ENCODE measurements at regions of chr7 and their contacts with region 1.

Region 1: DNA sequence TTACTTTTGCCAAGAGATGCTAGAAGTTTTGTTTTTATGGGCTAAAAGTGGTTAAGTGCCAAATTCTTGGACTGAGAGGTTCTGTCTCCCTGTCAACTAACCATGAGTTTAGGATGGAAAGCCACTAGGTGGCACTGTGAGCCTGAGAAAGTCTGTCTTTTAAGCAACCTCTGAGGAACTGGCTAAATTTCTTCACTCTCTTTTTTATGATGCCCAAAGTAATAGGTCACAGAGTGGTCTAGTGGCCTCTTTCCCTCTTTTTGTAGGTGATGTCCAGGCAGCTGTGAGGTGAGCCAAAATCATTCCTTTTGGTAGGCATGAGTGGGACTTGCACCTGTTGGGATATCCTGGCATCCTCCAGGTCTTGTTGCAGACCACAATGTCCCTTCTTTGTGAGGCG is 56.8 kb downstream of the SND1 start:
- DNase-seq: no peak
- H3K4me3 ChIP-seq: no peak overlapping the region
- H3K27ac ChIP-seq: no peak overlapping the region
- H3K4me1 ChIP-seq: peaks cover 0 to 4% (median 0%) of the 10 kb centered on the region in 4 donors
- H3K27me3 ChIP-seq: no peaks in the 10 kb centered on the region
- CTCF ChIP-seq: peak; percentile 71 to 73 (median 72)
- EP300 ChIP-seq: no peak
- POLR2A ChIP-seq: no peak

Region 2: DNA sequence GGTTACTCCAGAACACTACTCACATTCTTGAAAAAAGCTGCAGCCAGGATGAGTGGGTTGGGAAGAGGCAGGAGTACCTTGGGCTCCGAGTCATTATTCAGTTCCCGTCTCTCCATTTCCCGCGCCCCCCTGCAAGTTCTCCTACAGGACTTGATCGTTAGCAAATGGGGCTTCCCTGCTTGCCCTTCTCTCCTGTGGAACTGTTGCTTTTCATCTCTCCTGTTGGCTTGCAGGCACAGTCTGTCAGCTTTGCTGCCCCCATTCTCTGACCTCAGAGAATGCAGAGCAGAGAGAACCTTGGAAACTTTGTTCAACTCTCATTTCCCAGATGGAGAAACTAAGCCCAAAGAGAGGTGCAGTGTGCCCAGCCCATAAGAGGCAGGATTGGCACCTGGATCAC is 358.1 kb after region 1 on chr7:
- intact Hi-C with region 1: no loop called
- DNase-seq: no peak
- H3K4me3 ChIP-seq: no peak overlapping the region
- H3K27ac ChIP-seq: no peak overlapping the region
- H3K4me1 ChIP-seq: no peaks in the 10 kb centered on the region
- H3K27me3 ChIP-seq: no peaks in the 10 kb centered on the region
- CTCF ChIP-seq: no peak
- EP300 ChIP-seq: no peak
- POLR2A ChIP-seq: no peak

Region 3: DNA sequence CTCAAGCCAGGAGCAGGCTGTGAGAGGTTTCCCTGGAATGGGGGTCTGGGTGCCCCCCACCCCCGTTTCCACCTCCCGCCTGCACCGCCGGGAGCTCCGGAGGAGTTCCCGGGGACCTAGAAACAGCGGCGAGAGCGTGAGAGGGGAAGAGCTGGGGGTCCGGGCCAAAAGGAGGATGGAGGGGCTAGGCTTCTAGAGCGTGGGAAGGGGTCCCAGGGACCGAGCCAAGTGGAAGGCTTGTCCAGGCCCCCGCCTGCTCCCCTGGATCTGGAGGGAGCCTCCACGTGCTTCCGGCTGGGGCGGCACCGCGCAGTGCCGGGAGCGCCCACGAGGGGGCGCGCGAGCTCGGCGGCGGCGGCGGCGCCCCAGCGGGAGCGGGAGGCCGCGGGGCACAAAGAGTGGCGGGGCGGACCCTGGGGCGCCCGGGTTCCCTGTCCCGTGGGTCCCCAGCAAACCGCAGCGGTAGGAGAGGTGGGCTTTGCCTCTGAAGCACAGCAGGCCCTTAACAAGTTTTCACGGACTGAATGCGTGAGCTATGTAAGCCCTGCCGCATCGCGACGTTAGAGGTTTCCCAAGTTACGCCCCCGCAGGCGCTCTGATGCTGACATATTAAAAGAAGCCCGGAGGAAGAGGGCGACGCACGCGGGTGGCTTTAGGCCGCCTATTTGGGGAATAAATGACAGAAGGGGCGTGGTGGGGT is 426.9 kb after region 1 on chr7:
- intact Hi-C with region 1: loop called (anchors 5 kb)
- DNase-seq: peak; percentile 91
- H3K4me3 ChIP-seq: peak overlapping the region; percentile 53 to 81 (median 60)
- H3K27ac ChIP-seq: no peak overlapping the region
- H3K4me1 ChIP-seq: peaks cover 18 to 23% (median 21%) of the 10 kb centered on the region in 4 donors
- H3K27me3 ChIP-seq: peaks cover 0 to 59% (median 16%) of the 10 kb centered on the region in 4 donors
- CTCF ChIP-seq: peak; percentile 73 to 100 (median 84)
- EP300 ChIP-seq: no peak
- POLR2A ChIP-seq: no peak

Region 4: DNA sequence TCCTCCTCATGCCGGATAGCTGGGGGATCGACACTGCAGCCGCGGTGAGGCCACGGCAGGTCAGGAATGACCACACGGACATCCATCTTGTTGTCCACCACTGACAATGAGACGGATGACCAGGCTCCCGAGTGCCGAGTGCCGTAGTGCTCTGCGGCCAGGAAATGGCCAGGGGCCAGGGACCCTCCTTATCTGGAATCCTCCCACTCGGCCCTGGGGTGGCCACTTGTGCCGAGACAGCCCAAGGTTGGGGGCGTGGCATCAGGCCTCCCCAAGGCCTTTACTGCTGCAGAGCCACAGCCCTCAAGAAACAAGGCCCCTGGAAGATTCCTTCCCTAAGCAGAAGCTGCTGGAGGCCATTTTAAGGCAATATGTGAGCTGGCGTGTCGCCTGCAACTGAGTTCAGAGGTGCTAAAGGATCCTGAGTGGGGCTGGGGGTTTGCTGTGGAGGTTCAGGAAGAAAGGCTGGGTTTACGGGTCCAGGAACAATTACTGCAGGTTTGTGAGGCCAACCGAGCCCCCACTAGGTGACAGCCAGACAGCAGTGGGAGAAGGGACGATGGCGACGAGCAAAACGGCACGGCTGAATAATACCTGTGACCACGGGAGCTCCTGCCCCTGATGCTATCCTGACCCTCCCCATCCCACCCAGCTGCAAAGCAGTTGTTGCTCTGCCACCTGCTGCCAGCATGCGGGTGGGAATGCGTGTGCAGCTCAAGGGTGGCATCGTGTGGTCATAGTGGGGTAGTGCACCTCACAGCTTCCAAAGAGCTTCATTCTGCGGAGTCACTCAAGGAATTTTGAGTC is 500.6 kb after region 1 on chr7:
- intact Hi-C with region 1: loop called (anchors 2 kb)
- DNase-seq: no peak
- H3K4me3 ChIP-seq: no peak overlapping the region
- H3K27ac ChIP-seq: no peak overlapping the region
- H3K4me1 ChIP-seq: peaks cover 0 to 13% (median 5%) of the 10 kb centered on the region in 4 donors
- H3K27me3 ChIP-seq: peaks cover 0 to 75% (median 0%) of the 10 kb centered on the region in 4 donors
- CTCF ChIP-seq: peak; percentile 97 to 99 (median 98)
- EP300 ChIP-seq: no peak
- POLR2A ChIP-seq: no peak